CD4-positive, alpha-beta T cell (primary cell): ENCODE measurements at regions of chr6 and their contacts with region 1.

Region 1: GRCh38 chr6:26196846-26197648 is 109.8 kb downstream of the HFE start:
- DNase-seq: peak; percentile 60 to 97 (median 70)
- ATAC-seq: peak; percentile 55
- H3K4me3 ChIP-seq: peak overlapping the region; percentile 75
- H3K4me3 Mint-ChIP-seq: peak overlapping the region; percentile 94
- H3K27ac ChIP-seq: peak overlapping the region; percentile 81 to 87
- H3K27ac Mint-ChIP-seq: peak overlapping the region; percentile 97
- H3K4me1 ChIP-seq: peaks cover 26% of the 10 kb centered on the region
- H3K4me1 Mint-ChIP-seq: peaks cover 57% of the 10 kb centered on the region
- H3K27me3 ChIP-seq: no peaks in the 10 kb centered on the region
- H3K27me3 Mint-ChIP-seq: no peaks in the 10 kb centered on the region
- CTCF ChIP-seq: no peak

Region 2: GRCh38 chr6:25971187-25971811 is 225.7 kb before region 1 on chr6:
- CTCF ChIA-PET with region 1: no interaction called
- POLR2A ChIA-PET with region 1: no interaction called
- intact Hi-C with region 1: no loop called
- DNase-seq: no peak
- ATAC-seq: no peak
- H3K4me3 ChIP-seq: no peak overlapping the region
- H3K4me3 Mint-ChIP-seq: no peak overlapping the region
- H3K27ac ChIP-seq: no peak overlapping the region
- H3K27ac Mint-ChIP-seq: peak overlapping the region; percentile 2
- H3K4me1 ChIP-seq: peaks cover 22% of the 10 kb centered on the region
- H3K4me1 Mint-ChIP-seq: peaks cover 57% of the 10 kb centered on the region
- H3K27me3 ChIP-seq: no peaks in the 10 kb centered on the region
- H3K27me3 Mint-ChIP-seq: no peaks in the 10 kb centered on the region
- CTCF ChIP-seq: no peak

Region 3: DNA sequence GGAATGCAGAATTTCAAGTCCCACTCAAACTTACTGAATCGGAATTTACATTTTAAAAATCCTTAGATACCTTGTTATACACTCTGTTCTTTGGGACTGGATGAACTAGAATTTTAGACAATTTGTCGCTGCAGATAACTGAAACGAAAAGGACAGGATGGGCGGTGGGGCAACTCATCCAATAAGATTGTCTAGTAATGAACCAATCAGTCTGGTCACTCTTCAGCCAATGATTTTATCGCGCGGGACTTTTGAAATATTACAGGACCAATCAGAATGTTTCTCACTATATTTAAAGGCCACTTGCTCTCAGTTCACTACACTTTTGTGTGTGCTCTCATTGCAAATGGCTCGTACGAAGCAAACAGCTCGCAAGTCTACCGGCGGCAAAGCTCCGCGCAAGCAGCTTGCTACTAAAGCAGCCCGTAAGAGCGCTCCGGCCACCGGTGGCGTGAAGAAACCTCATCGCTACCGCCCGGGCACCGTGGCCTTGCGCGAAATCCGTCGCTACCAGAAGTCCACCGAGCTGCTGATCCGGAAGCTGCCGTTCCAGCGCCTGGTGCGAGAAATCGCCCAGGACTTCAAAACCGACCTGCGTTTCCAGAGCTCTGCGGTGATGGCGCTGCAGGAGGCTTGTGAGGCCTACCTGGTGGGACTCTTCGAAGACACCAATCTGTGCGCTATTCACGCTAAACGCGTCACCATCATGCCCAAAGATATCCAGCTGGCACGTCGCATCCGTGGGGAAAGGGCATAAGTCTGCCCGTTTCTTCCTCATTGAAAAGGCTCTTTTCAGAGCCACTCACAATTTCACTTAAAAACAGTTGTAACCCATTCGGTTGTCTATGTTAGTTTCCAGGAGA is 151.8 kb before region 1 on chr6:
- CTCF ChIA-PET with region 1: interaction called, 3 read pairs
- POLR2A ChIA-PET with region 1: interaction called, 197 read pairs
- intact Hi-C with region 1: no loop called
- DNase-seq: peak; percentile 49 to 96 (median 74)
- ATAC-seq: peak; percentile 55
- H3K4me3 ChIP-seq: peak overlapping the region; percentile 70
- H3K4me3 Mint-ChIP-seq: peak overlapping the region; percentile 97
- H3K27ac ChIP-seq: peak overlapping the region; percentile 71 to 91
- H3K27ac Mint-ChIP-seq: peak overlapping the region; percentile 94
- H3K4me1 ChIP-seq: peaks cover 21% of the 10 kb centered on the region
- H3K4me1 Mint-ChIP-seq: peaks cover 28% of the 10 kb centered on the region
- H3K27me3 ChIP-seq: no peaks in the 10 kb centered on the region
- H3K27me3 Mint-ChIP-seq: no peaks in the 10 kb centered on the region
- CTCF ChIP-seq: no peak

Region 4: DNA sequence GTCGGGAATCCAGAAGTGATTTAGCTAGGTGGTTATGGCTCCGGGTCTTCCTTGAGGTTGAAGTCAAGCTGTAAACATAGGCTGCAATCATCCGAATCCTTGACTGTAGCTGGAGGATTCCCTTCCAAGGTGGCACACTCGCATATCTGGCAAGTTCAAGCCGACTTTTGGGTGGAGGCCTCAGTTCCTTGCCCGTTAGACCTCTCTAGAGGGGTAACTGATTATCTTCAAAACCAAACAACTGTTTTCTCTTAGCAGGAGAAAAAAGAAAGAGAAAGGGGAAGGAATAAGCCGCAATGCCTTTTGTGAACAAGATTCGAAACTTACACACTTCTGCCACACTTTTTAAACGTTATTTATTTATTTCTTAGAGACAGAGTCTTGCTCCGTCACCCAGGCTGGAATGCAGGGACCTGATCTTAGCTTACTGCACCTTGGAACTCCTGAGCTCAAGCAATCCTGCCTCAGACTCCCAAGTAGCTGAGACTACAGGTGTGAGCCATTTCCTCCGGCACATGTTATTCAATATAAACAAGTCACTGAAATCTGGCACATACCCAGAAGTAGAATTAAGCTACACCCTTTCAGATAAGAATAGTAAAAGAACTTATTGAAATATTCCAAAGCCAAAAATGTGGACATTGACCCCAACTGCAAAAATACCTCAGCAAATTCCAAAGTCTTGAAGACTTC is 33.5 kb before region 1 on chr6:
- CTCF ChIA-PET with region 1: interaction called, 35 read pairs
- POLR2A ChIA-PET with region 1: interaction called, 1,305 read pairs
- intact Hi-C with region 1: loop called (anchors 1 to 2 kb)
- DNase-seq: no peak
- ATAC-seq: no peak
- H3K4me3 ChIP-seq: no peak overlapping the region
- H3K4me3 Mint-ChIP-seq: peak overlapping the region; percentile 75
- H3K27ac ChIP-seq: no peak overlapping the region
- H3K27ac Mint-ChIP-seq: peak overlapping the region; percentile 80
- H3K4me1 ChIP-seq: peaks cover 57% of the 10 kb centered on the region
- H3K4me1 Mint-ChIP-seq: peaks cover 47% of the 10 kb centered on the region
- H3K27me3 ChIP-seq: no peaks in the 10 kb centered on the region
- H3K27me3 Mint-ChIP-seq: no peaks in the 10 kb centered on the region
- CTCF ChIP-seq: no peak

Region 5: DNA sequence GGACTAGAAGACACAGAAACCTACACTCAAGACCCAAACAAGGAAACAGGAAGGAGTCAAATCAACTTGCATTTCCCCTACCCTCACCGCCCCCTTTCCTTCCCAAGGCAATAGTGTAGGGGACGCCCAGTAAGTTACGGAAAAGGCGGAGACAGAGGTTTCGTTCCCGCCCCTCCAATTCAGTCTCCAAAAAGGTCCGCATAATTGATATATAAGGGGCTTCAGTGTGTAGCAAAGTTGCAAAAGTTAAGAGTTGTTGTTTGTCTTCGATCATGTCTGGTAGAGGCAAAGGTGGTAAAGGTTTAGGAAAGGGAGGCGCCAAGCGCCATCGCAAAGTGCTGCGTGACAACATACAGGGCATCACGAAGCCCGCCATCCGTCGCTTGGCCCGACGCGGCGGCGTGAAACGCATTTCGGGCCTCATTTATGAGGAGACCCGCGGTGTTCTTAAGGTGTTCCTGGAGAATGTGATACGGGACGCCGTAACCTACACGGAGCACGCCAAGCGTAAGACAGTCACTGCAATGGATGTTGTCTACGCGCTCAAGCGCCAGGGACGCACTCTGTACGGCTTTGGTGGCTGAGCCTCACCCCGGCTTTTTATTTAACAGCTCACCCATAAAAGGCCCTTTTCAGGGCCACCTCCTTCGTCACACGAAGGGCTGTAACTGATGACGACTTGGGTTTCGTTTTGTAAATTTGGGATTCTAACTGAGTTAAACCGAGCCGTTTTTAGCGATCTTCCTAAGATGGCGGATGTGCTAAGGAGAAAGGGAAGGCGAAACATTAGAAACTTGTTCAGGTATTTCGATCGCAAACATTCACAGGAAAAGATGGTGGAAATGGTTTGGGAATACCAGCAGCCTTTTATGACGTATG is 43.3 kb after region 1 on chr6:
- CTCF ChIA-PET with region 1: no interaction called
- POLR2A ChIA-PET with region 1: interaction called, 637 read pairs
- intact Hi-C with region 1: loop called in 1 of 2 experiments (anchors 2 kb)
- DNase-seq: peak; percentile 45 to 96 (median 64)
- ATAC-seq: peak; percentile 76
- H3K4me3 ChIP-seq: peak overlapping the region; percentile 66
- H3K4me3 Mint-ChIP-seq: peak overlapping the region; percentile 84
- H3K27ac ChIP-seq: peak overlapping the region; percentile 78 to 90
- H3K27ac Mint-ChIP-seq: peak overlapping the region; percentile 96
- H3K4me1 ChIP-seq: peaks cover 17% of the 10 kb centered on the region
- H3K4me1 Mint-ChIP-seq: peaks cover 23% of the 10 kb centered on the region
- H3K27me3 ChIP-seq: no peaks in the 10 kb centered on the region
- H3K27me3 Mint-ChIP-seq: no peaks in the 10 kb centered on the region
- CTCF ChIP-seq: no peak

Region 6: GRCh38 chr6:26322645-26323482 is 125.8 kb after region 1 on chr6:
- CTCF ChIA-PET with region 1: interaction called, 6 read pairs
- POLR2A ChIA-PET with region 1: interaction called, 34 read pairs
- intact Hi-C with region 1: no loop called
- DNase-seq: peak in 10 of 14 experiments; percentile 20 to 88 (median 52)
- ATAC-seq: peak; percentile 75
- H3K4me3 ChIP-seq: peak overlapping the region; percentile 54
- H3K4me3 Mint-ChIP-seq: peak overlapping the region; percentile 96
- H3K27ac ChIP-seq: no peak overlapping the region
- H3K27ac Mint-ChIP-seq: peak overlapping the region; percentile 93
- H3K4me1 ChIP-seq: peaks cover 23% of the 10 kb centered on the region
- H3K4me1 Mint-ChIP-seq: peaks cover 30% of the 10 kb centered on the region
- H3K27me3 ChIP-seq: no peaks in the 10 kb centered on the region
- H3K27me3 Mint-ChIP-seq: peaks cover 35% of the 10 kb centered on the region
- CTCF ChIP-seq: no peak

Region 7: GRCh38 chr6:27146706-27147505 is 949.9 kb after region 1 on chr6:
- CTCF ChIA-PET with region 1: interaction called, 3 read pairs
- POLR2A ChIA-PET with region 1: interaction called, 85 read pairs
- intact Hi-C with region 1: no loop called
- DNase-seq: peak; percentile 61 to 99 (median 72)
- ATAC-seq: peak; percentile 86
- H3K4me3 ChIP-seq: peak overlapping the region; percentile 69
- H3K4me3 Mint-ChIP-seq: no peak overlapping the region
- H3K27ac ChIP-seq: peak overlapping the region; percentile 84 to 97
- H3K27ac Mint-ChIP-seq: no peak overlapping the region
- H3K4me1 ChIP-seq: peaks cover 17% of the 10 kb centered on the region
- H3K4me1 Mint-ChIP-seq: peaks cover 11% of the 10 kb centered on the region
- H3K27me3 ChIP-seq: no peaks in the 10 kb centered on the region
- H3K27me3 Mint-ChIP-seq: no peaks in the 10 kb centered on the region
- CTCF ChIP-seq: no peak

Region 8: DNA sequence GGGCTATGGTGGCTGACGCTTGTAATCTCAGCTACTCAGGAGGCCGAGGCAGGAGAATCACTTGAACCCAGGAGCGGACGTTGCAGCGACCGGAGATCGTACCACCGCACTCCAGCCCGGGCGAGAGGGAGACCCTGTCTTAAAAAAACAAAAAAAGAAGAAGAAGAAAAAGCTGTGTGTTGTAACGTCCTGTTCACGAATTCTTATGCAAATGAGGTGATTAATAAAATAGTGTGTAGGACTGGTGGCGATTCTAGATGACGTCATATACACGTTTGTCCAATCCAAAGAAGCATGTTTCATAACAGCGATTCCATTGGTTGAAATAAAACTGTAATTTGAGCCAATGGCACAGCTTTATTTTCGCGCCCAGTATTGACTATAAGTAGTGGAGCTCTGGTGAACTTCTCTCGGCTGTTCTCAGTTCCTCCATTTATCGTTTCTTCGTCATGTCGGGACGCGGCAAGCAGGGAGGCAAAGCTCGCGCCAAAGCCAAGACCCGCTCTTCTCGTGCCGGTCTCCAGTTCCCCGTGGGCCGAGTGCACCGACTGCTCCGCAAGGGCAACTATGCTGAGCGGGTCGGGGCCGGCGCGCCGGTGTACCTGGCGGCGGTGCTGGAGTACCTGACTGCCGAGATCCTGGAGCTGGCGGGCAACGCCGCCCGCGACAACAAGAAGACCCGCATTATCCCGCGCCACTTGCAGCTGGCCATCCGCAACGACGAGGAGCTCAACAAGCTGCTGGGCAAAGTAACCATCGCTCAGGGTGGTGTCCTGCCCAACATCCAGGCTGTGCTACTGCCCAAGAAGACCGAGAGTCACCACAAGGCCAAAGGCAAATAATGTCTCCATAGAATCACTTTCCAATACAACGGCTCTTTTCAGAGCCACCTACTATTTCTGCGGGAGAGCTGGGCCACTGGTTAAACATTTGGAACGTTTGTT is 1668.1 kb after region 1 on chr6:
- CTCF ChIA-PET with region 1: no interaction called
- POLR2A ChIA-PET with region 1: interaction called, 76 read pairs
- intact Hi-C with region 1: no loop called
- DNase-seq: peak in 13 of 14 experiments; percentile 35 to 97 (median 61)
- ATAC-seq: peak; percentile 83
- H3K4me3 ChIP-seq: peak overlapping the region; percentile 59
- H3K4me3 Mint-ChIP-seq: peak overlapping the region; percentile 100
- H3K27ac ChIP-seq: peak overlapping the region; percentile 54 to 78
- H3K27ac Mint-ChIP-seq: peak overlapping the region; percentile 93
- H3K4me1 ChIP-seq: peaks cover 38% of the 10 kb centered on the region
- H3K4me1 Mint-ChIP-seq: peaks cover 41% of the 10 kb centered on the region
- H3K27me3 ChIP-seq: no peaks in the 10 kb centered on the region
- H3K27me3 Mint-ChIP-seq: peaks cover 3% of the 10 kb centered on the region
- CTCF ChIP-seq: no peak